Aorta (tissue), 5 donors: ENCODE measurements at regions of chr1 and their contacts with region 1.

Region 1: GRCh38 chr1:20493839-20494608 is 8.0 kb upstream of the CAMK2N1 start:
- DNase-seq: peak; percentile 84 to 92
- ATAC-seq: peak; percentile 88
- H3K4me3 ChIP-seq: no peak overlapping the region
- H3K27ac ChIP-seq: no peak overlapping the region
- H3K4me1 ChIP-seq: no peaks in the 10 kb centered on the region
- H3K27me3 ChIP-seq: no peaks in the 10 kb centered on the region

Region 2: DNA sequence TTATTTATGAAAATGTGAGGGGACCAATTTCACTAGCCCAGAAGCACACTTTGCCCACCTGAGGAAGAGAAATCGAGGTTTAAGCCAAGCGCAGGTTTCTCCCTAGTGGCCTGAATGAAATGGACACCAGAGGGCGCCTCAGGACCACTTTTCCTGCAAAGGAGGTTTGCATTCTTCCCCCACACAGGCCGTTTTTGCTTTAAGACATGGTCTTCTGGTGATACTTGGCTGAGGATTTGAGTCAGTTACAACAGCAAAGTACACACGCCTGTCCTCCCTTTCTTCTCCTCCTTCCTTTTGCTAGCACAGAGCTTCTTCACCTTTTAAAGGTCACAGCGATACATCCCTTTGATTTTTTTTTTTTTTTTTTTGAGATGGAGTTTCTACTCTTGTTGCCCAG is 576.0 kb before region 1 on chr1:
- intact Hi-C with region 1: loop called (anchors 2 kb)
- DNase-seq: peak; percentile 82 to 91
- ATAC-seq: peak; percentile 78
- H3K4me3 ChIP-seq: no peak overlapping the region
- H3K27ac ChIP-seq: no peak overlapping the region
- H3K4me1 ChIP-seq: no peaks in the 10 kb centered on the region
- H3K27me3 ChIP-seq: no peaks in the 10 kb centered on the region

Region 3: DNA sequence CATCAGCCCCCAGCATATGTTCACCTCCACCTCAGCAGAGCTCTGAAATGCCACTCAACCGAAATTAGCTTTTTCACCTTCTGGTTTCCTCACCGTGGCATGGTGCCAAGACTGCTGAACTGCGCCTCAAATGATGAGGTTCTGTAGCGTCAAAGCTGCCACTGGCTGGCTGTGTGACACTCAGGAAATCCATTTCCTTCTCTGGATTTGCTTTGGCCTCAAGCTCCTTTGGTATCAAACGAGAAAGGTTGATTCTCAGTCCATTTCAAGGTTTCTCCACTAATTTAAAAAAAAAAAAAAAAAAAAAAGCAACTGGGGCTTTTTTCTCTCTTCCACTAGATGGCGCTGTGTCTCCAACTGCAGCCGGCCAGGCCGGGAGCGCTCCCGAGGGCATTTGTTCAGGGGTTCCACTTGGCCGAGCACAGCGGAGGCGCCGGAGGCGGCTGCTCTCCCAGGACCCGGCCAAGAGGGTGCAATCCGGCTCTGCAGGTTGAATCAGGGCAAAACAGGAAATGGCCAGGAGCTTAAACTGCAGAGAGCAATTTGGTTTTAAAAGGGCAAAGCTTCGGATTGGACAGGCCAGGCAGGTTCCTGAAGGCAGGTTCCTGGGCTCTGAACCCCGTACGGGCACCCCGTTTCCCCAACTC is 281.2 kb before region 1 on chr1:
- intact Hi-C with region 1: loop called (anchors 2 kb)
- DNase-seq: peak; percentile 64 to 82
- ATAC-seq: no peak
- H3K4me3 ChIP-seq: no peak overlapping the region
- H3K27ac ChIP-seq: no peak overlapping the region
- H3K4me1 ChIP-seq: no peaks in the 10 kb centered on the region
- H3K27me3 ChIP-seq: no peaks in the 10 kb centered on the region

Region 4: DNA sequence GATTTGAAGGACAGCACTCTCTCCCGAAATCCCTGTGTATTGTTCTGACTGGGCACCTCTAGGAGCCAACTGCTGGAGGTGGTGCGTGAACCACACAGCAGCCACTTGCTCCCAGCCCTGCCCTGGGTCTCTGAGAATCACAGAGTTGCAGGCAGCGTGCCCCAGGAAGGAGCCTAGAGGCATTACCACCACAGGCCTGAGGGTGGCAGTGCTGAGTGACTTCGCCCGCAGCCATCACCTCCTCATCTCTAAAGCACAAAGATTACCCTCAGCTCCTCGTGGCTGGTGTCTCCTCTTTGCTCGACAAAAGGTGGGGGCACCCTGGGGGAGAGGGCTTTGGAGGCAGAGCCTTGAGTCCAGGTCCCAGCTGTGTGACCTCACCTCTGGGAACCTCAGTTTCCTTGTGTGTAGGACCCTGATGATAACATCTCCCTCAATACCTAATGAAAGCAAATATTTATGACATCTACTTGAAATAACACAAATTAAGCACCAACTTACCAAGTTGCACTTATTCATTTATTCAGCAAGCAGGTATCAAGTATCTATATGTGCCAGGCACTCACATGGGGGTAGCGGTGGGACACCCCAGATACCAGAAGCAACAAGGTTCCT is 117.0 kb before region 1 on chr1:
- intact Hi-C with region 1: loop called (anchors 1 to 5 kb)
- DNase-seq: no peak
- ATAC-seq: no peak
- H3K4me3 ChIP-seq: no peak overlapping the region
- H3K27ac ChIP-seq: no peak overlapping the region
- H3K4me1 ChIP-seq: no peaks in the 10 kb centered on the region
- H3K27me3 ChIP-seq: no peaks in the 10 kb centered on the region

Region 5: GRCh38 chr1:20732588-20733360 is 238.8 kb after region 1 on chr1 and contains the start of gene SH2D5:
- intact Hi-C with region 1: no loop called
- DNase-seq: peak; percentile 82 to 89
- ATAC-seq: peak; percentile 83
- H3K4me3 ChIP-seq: peak within 1 kb of the TSS; percentile 28 to 54
- H3K27ac ChIP-seq: peak within 1 kb of the TSS in 1 of 2 donors; percentile 78
- H3K4me1 ChIP-seq: no peaks in the 10 kb centered on the region
- H3K27me3 ChIP-seq: no peaks in the 10 kb centered on the region
- total RNA-seq, gene SH2D5: 0.26 to 0.39 TPM